ENCODE measurements at regions of chr1 and their contacts with region 1.

Region 1: GRCh38 chr1:182781841-182782586 is 7.6 kb upstream of the NPL start:
- DNase-seq: peak; percentile 89
- H3K4me3 Mint-ChIP-seq: no peak overlapping the region
- H3K27ac Mint-ChIP-seq: no peak overlapping the region
- H3K4me1 Mint-ChIP-seq: peaks cover 18% of the 10 kb centered on the region
- H3K27me3 Mint-ChIP-seq: no peaks in the 10 kb centered on the region

Region 2: GRCh38 chr1:182446033-182446669 is 335.9 kb before region 1 on chr1:
- CTCF ChIA-PET with region 1: interaction called, 5 read pairs
- intact Hi-C with region 1: loop called (anchors 1 kb)
- DNase-seq: peak; percentile 59
- H3K4me3 Mint-ChIP-seq: no peak overlapping the region
- H3K27ac Mint-ChIP-seq: no peak overlapping the region
- H3K4me1 Mint-ChIP-seq: no peaks in the 10 kb centered on the region
- H3K27me3 Mint-ChIP-seq: no peaks in the 10 kb centered on the region

Region 3: GRCh38 chr1:182716740-182717720 is 65.0 kb before region 1 on chr1:
- CTCF ChIA-PET with region 1: interaction called, 4 read pairs
- intact Hi-C with region 1: loop called (anchors 2 kb)
- DNase-seq: no peak
- H3K4me3 Mint-ChIP-seq: no peak overlapping the region
- H3K27ac Mint-ChIP-seq: no peak overlapping the region
- H3K4me1 Mint-ChIP-seq: peaks cover 40% of the 10 kb centered on the region
- H3K27me3 Mint-ChIP-seq: no peaks in the 10 kb centered on the region

Region 4: GRCh38 chr1:182869241-182869666 is 87.2 kb after region 1 on chr1:
- CTCF ChIA-PET with region 1: no interaction called
- intact Hi-C with region 1: no loop called
- DNase-seq: peak; percentile 13
- H3K4me3 Mint-ChIP-seq: no peak overlapping the region
- H3K27ac Mint-ChIP-seq: peak overlapping the region; percentile 31
- H3K4me1 Mint-ChIP-seq: peaks cover 24% of the 10 kb centered on the region
- H3K27me3 Mint-ChIP-seq: no peaks in the 10 kb centered on the region

Measured in activated naive CD4-positive, alpha-beta T cell treated with anti-CD3 and anti-CD28 coated beads for 36 hours (primary cell).